ENCODE measurements at regions of chr4 and their contacts with region 1.

Region 1: GRCh38 chr4:74531963-74532794 is 87.2 kb downstream of the AREG start:
- DNase-seq: no peak
- H3K4me3 ChIP-seq: no peak overlapping the region
- H3K27ac ChIP-seq: no peak overlapping the region
- H3K27me3 ChIP-seq: peaks cover 0 to 4% (median 0%) of the 10 kb centered on the region in 45 donors
- CTCF ChIP-seq: peak in 55 of 56 donors; percentile 14 to 73 (median 56)

Region 2: DNA sequence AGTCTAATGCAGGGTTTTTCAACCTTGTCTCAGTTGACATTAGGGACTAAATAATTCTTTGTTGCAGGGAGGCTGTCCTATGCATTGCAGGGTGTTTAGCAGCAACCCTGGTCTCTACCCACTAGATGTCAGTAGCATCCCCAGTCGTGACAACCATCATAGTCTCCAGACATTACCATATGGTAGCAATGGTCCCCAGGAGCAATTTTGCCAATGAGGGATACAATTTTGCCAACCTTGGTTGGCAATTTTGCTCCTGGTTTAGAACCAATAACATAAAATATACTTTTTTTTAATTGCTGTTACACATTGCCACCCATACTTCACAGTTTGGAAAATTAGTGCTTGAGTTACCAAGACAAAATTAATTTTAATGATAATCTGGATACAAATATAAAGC is 161.3 kb before region 1 on chr4:
- intact Hi-C with region 1: loop called (anchors 2 to 10 kb)
- DNase-seq: no peak
- H3K4me3 ChIP-seq: no peak overlapping the region
- H3K27ac ChIP-seq: no peak overlapping the region
- H3K27me3 ChIP-seq: peaks cover 0 to 33% (median 7%) of the 10 kb centered on the region in 45 donors
- CTCF ChIP-seq: peak in 48 of 56 donors; percentile 20 to 59 (median 43)

Region 3: DNA sequence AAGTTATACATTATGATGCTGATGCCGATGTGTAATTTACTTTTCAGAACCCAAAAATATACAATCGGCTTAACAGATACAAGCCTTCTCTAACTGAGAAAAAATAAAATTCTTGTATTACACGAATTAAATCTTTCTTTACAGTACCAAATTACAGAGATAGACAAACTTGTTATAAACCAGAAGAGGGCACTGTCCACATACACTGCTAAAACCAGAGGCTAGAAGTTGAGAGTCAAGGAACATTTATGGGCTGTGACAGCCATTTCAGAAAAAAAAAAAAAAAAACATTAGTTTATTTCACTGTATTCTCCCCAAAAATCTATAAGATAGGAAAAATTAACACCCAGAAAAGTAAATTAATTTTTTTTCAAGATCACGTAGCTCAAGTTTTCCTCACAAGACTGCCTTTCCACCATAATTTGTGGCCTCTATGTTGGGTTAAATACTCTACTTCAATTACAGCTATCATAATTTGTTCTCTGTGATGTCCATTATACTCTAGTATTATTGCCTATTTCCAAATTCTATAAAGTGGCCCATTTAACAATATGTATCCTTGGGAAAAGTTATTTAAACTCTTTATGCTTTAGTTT is 155.2 kb before region 1 on chr4:
- intact Hi-C with region 1: loop called (anchors 2 to 10 kb)
- DNase-seq: no peak
- H3K4me3 ChIP-seq: no peak overlapping the region
- H3K27ac ChIP-seq: no peak overlapping the region
- H3K27me3 ChIP-seq: peaks cover 0 to 4% (median 0%) of the 10 kb centered on the region in 45 donors
- CTCF ChIP-seq: peak; percentile 37 to 78 (median 62)

Measured in dorsolateral prefrontal cortex (tissue), 120 donors.